GM10248 (cell line): ENCODE measurements at regions of chr3 and their contacts with region 1.

Region 1: DNA sequence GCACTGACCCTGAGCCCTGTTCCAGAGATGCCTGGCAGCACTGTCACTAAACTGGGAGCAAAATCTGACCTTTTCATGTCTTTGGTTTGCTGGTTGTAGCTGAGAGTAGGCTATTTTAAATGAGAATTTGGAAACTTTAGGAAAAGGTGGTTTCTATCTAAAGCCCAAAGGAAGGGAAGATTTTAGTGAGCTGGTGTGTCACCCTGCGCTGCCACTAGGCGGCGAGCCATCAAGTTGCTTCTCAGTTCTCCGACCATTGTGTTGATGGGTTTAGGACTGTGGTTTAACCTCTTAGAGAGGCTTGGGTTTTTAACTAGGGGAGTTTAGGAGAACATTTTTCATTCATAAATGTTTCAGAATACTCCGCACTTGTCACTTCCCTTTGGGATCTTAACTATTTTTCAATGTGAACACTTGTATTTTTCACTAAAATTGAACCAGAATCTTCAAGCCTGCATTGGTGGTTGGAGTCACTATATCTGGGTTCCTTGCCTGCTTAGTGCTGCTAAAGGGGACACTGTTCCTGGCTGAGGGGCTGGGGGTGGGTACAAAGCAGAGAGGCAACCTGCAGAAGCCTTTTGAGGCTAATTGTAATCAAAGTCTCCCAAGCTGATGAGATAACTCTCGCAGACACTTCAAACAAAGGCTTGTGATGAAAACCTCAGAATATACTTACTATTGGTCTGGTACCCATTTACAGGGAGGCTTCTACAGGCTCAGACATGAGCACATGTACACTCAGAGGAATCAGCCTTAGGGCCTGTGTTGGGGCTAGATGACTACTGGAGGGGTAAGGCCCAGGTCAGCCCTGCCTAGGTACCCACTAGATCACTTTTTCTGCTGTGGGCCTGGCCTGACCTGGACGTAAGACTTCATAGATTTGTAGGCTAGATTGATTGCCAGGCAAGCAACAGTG is 16.8 kb downstream of the EXOSC7 start:
- DNase-seq: peak; percentile 35
- CTCF ChIP-seq: peak; percentile 41

Region 2: DNA sequence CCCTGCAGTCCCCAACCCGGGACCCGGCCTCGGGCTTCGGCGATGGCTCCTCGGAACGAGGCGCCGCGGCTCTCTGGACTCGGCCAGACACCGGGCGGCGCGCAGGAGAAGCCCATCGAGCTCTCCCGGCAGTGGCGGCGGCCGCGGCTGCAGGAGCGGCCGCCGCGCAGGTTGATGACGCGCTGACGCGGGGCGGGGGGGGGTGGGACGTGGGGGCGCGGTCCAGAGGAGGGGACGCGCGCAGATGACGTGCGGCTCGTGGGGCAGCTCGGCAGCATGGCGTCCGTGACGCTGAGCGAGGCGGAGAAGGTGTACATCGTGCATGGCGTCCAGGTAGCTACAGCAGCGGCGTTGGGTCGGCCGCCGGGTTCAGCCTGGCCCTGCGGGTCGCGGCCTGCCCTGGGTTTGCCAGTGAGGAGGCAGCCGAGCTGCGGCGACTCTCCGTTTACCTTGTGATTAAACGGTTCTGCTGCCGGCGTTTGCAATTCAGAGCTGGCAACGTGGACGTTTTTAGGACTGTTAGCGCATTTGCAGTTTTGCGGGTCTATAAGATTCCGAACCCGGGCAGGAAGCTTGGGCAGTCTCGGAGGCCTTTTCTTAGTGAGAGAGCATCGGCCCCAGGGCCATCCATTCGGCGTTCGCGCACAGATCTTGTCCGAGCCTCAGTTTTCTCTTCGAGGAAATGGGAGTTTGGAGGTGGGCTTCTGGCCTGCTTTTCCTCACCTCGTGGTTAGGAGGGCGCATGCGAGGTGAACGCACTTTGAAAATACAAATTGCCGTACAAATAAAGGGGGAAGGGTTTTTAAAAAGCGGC is 16.6 kb before region 1 on chr3 and contains the starts of genes EXOSC7 and ZDHHC3:
- CTCF ChIA-PET with region 1: interaction called, 16 read pairs
- POLR2A ChIA-PET with region 1: no interaction called
- DNase-seq: peak; percentile 96
- CTCF ChIP-seq: no peak

Region 3: GRCh38 chr3:45123030-45123429 is 130.2 kb after region 1 on chr3:
- CTCF ChIA-PET with region 1: no interaction called
- POLR2A ChIA-PET with region 1: no interaction called
- DNase-seq: peak; percentile 57
- CTCF ChIP-seq: no peak

Region 4: DNA sequence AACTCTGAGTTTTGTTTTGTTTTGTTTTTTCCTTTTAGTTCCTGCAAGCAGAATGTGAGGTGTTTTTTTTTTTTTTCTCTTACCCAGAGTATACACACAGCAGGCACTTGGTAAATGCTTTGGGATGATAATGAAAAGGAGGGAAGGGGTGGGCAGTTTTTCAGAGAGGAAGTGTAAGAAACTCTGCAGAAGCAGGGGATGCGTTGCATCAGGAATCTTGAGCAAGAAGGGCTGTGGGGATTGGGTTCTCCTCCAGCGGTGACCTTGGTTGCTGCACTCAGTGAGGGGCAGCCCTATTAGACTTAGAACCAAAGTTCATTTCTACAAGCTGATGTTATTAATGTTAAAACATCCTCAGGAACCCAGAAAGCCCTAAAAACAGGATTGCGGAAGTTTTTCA is 265.5 kb after region 1 on chr3:
- CTCF ChIA-PET with region 1: no interaction called
- POLR2A ChIA-PET with region 1: no interaction called
- DNase-seq: no peak
- CTCF ChIP-seq: no peak